BJ (cell line): ENCODE measurements at regions of chr4 and their contacts with region 1.

Region 1: GRCh38 chr4:17623451-17624001 is 9.1 kb downstream of the MED28 start:
- DNase-seq: peak; percentile 71
- H3K4me3 ChIP-seq: no peak overlapping the region
- H3K27me3 ChIP-seq: no peaks in the 10 kb centered on the region
- CTCF ChIP-seq: no peak

Region 2: GRCh38 chr4:17494258-17494657 is 129.3 kb before region 1 on chr4:
- CTCF ChIA-PET with region 1: no interaction called
- POLR2A ChIA-PET with region 1: no interaction called
- DNase-seq: peak; percentile 30
- H3K4me3 ChIP-seq: no peak overlapping the region
- H3K27me3 ChIP-seq: no peaks in the 10 kb centered on the region
- CTCF ChIP-seq: no peak

Region 3: DNA sequence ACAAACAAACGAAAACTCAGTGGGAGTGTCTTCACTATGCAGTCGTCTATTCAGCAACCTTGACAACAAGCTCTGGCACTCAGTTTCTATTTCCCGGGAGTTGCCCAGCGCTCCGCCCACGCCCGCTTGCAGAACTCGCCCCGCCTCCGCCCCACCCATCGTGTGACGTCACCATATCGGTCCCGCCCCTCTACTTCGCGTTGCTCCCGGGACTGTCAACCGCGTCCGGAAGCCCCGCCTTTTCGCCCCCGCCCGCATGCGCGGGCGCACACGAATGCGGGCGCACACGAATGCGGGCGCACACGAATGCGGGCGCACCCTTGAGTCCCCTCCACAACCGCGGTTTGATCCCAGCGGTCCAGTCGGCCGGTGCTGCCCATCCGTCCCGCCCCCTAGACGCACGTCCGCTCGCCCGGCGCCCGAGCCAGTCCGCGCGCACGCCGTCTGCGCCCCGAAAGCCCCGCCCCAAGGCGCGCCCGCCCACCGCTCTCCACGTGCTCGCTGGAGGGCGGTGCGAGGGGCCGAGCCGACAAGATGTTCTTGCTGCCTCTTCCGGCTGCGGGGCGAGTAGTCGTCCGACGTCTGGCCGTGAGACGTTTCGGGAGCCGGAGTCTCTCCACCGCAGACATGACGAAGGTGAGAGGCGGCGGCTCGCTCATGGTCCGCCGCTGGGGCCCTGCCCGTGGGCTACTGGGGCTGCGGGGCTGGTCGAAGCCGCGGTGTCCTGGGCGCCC is 46.4 kb before region 1 on chr4 and contains the start of gene LAP3:
- CTCF ChIA-PET with region 1: no interaction called
- POLR2A ChIA-PET with region 1: no interaction called
- DNase-seq: peak; percentile 73
- H3K4me3 ChIP-seq: peak within 1 kb of the TSS; percentile 86
- H3K27me3 ChIP-seq: no peaks in the 10 kb centered on the region
- CTCF ChIP-seq: no peak
- polyA plus RNA-seq, gene LAP3: 42.8 and 52.8 TPM in 2 replicates

Region 4: DNA sequence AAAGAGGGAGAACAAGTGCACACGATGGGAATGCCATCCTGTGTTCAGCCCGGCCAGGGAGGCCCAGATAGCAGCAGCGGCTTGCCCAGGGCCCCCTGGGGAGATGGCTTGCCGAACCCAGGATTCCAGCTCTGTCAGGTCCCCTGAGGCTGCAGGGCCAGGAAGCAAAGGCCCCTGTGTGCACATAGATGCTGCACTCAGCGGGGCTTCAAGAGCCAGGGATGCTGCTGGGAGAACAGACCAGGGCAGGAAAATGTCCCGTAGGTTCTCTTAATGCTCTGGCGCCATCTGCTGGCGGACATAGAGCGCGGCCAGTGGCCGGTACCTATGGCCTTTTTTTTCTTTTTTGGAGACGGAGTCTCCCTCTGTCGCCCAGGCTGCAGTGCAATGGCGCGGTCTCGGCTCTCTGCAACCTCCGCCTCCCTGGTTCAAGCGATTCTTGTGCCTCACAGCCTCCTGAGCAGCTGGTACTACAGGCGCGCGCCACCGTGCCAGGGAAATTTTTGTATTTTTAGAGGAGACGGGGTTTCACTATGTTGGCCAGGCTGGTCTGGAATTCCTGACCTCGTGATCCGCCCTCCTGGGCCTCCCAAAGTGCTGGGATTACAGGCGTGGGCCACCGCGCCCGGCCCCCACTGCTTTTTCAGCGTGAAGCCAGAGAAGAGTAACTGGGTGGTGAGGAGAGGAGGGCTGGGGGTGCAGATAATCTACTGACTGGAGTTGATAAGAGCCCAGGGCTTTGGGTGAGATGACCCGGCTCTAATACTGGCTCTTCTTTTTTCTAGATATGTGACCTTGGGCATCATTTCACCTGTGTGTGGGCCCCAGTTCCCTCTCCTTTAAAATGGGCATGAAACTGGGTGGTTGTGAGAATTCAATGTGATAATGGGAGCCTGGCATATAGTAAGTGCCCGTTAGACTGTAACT is 13.4 kb after region 1 on chr4:
- CTCF ChIA-PET with region 1: interaction called, 13 read pairs
- POLR2A ChIA-PET with region 1: no interaction called
- DNase-seq: no peak
- H3K4me3 ChIP-seq: no peak overlapping the region
- H3K27me3 ChIP-seq: no peaks in the 10 kb centered on the region
- CTCF ChIP-seq: peak; percentile 91